Posterior vena cava (tissue), 2 donors: ENCODE measurements at regions of chrX and their contacts with region 1.

Region 1: GRCh38 chrX:123201720-123202119 is 17.6 kb downstream of the GRIA3 start:
- DNase-seq: no peak

Region 2: GRCh38 chrX:121570072-121570841 is 1631.5 kb before region 1 on chrX:
- intact Hi-C with region 1: loop called in 1 of 2 experiments (anchors 5 kb)
- DNase-seq: no peak

Region 3: GRCh38 chrX:123077631-123078030 is 124.1 kb before region 1 on chrX:
- intact Hi-C with region 1: no loop called
- DNase-seq: no peak

Region 4: GRCh38 chrX:123157586-123157985 is 44.1 kb before region 1 on chrX:
- intact Hi-C with region 1: no loop called
- DNase-seq: no peak

Region 5: DNA sequence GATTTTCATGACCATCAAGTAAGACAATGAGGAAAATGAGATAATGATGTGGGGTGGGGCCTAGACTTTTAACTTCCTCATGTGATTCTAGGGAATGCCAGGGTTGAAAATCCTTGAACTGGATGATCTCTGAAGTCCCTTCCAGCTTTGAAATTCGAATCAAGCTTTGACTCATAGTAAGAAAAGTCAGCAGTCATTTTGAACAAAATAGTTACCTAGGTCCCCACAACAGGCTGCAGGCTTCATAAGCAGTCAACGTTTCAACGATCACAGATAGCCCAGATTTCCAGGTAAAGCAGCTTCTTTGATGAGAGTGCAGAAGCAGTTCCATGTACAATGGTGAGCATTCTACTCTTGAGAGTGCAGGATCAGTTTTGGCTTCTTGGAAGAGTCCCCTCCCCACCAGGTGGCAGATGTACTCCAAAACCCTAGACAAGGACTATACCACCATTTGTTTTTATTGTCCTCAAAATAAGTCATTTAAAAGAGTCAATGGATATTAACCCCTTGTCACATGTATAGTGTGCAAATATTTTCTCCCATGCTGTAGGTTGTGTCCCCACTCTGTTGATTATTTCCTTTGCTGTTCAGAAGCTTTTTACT is 76.2 kb after region 1 on chrX:
- intact Hi-C with region 1: no loop called
- DNase-seq: no peak

Region 6: DNA sequence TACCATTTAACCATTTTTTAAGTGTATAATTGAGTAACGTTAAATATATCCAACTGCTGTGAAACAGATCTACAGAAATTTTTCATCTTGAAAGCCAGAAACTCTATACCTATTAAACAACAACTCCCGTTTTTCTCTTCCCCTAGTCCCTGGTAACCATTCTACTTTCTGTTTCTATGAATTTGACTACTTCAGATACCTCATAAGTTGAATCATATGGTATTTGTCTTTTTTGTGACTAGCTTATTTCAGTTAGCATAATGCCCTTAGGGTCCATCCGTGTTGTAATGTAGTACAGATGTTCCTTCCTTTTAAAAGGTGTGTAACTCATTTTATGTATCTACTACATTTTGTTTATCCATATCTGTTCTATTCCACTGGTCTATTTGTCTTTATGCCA is 808.4 kb after region 1 on chrX:
- intact Hi-C with region 1: no loop called
- DNase-seq: no peak